ENCODE measurements at regions of chr7 and their contacts with region 1.

Region 1: DNA sequence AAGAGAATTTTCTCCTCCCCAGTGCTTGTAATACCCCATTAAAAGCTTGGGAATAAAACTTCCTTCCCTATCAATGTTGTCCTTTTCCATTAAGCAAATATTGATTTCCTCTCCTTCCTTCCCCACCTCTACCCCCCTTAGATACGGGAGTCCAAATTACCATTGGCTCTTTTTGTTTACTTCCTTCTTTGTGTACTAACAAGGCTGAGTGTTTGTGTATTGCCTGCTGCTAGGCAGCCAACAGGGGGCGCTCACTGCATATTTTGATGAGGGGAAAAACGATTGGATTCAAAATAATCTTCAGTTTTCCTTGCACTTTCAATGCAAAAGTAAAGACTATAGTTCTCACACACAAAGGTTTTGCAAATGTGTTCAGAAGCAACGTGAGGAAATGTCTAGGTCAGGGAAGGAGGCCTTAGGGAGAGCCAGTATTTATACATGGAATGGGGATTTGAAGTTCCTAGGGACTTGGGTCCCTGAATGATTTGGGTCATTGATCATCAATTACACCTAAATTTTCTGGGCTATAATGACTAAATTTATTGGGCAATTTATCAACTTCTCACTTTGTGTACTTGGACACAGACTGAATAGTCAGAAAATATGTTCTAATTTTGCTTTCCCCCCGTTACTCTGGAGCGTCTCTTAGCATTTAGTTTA is 23.6 kb upstream of the VPS41 start:
- DNase-seq: peak; percentile 46 to 73
- H3K4me3 ChIP-seq: no peak overlapping the region
- H3K4me3 Mint-ChIP-seq: no peak overlapping the region
- H3K27ac Mint-ChIP-seq: no peak overlapping the region
- H3K4me1 ChIP-seq: peaks cover 19% of the 10 kb centered on the region
- H3K4me1 Mint-ChIP-seq: peaks cover 7% of the 10 kb centered on the region
- H3K27me3 ChIP-seq: no peaks in the 10 kb centered on the region
- H3K27me3 Mint-ChIP-seq: no peaks in the 10 kb centered on the region
- CTCF ChIP-seq: peak; percentile 87 to 93

Region 2: DNA sequence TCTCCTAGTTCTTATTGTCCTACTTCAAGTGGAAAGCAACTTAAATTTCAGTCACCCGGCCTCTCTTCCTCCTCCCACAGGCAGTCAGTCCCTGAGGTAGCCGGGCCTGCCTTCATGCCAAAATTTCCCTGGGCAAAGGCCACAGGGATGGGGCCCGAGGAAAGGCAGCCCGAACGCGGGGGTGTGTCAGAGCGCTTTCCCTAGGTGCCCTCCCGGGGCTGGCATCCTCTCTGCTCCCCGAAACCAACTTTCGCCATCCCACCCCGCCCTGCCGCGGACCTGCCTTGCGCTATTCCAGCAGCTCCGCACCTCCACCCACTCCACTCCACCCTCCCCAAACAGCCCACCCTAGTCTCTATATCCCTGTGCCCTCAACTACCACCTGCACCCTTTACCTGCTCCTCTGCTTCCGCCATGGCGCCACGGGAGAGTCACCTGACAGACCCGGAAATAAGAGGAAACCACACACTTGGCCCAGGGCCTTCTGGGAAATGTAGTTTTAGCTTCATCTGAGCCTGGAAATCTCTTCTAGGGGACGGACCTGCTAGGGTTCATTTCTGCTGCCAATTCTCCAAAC is 23.8 kb before region 1 on chr7 and contains the start of gene VPS41:
- CTCF ChIA-PET with region 1: no interaction called
- POLR2A ChIA-PET with region 1: no interaction called
- intact Hi-C with region 1: loop called (anchors 1 kb)
- DNase-seq: peak; percentile 82 to 83
- H3K4me3 ChIP-seq: peak within 1 kb of the TSS; percentile 94
- H3K4me3 Mint-ChIP-seq: peak within 1 kb of the TSS; percentile 99
- H3K27ac Mint-ChIP-seq: peak within 1 kb of the TSS; percentile 87
- H3K4me1 ChIP-seq: peaks cover 19% of the 10 kb centered on the region; the same call in 1 of the 2 replicates
- H3K4me1 Mint-ChIP-seq: peaks cover 16% of the 10 kb centered on the region
- H3K27me3 ChIP-seq: no peaks in the 10 kb centered on the region
- H3K27me3 Mint-ChIP-seq: no peaks in the 10 kb centered on the region
- CTCF ChIP-seq: no peak
- total RNA-seq, gene VPS41: 73.9 and 86.9 TPM in 2 replicates

Region 3: GRCh38 chr7:39073432-39073831 is 140.8 kb after region 1 on chr7:
- CTCF ChIA-PET with region 1: no interaction called
- POLR2A ChIA-PET with region 1: no interaction called
- intact Hi-C with region 1: loop called (anchors 1 kb)
- DNase-seq: peak; percentile 51 to 55
- H3K4me3 ChIP-seq: no peak overlapping the region
- H3K4me3 Mint-ChIP-seq: peak overlapping the region; percentile 56
- H3K27ac Mint-ChIP-seq: peak overlapping the region; percentile 57
- H3K4me1 ChIP-seq: peaks cover 16% of the 10 kb centered on the region; the same call in 1 of the 2 replicates
- H3K4me1 Mint-ChIP-seq: peaks cover 15% of the 10 kb centered on the region
- H3K27me3 ChIP-seq: no peaks in the 10 kb centered on the region
- H3K27me3 Mint-ChIP-seq: no peaks in the 10 kb centered on the region
- CTCF ChIP-seq: no peak

Region 4: DNA sequence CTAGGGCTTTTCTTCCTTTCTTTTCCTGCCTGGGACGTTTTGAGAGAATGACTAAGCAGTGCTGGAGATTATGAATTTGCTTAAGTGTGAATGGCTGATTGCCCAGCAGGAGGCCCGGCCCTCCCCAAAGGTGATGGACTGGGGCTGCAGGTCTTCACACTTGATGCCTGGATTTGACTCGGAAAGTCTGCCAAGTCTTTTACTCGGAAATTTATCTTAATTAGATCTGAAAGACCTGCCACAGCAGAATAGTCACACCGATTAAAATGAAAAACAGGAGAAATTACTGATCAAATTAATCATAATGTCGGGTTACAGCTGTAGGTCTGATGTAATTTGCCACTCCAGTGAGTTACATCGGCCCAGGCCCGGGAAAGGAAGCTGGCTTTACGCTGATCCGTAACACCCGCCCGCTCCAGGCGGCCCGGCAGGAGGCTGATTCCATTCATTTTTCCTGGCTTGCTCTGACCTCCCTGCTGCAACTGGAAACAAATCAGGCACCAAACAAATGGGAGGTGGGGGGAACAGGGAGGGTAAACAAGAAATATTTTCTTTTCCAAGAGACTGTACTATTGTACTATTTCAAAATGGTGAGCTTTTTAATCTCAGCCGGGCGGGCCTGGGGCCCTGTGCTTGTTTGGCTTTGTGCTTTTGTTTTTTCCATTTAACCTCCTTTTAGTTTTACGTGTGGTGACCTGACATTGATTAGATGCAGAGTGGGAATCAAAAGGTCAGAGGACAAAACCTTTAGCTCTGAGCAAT is 421.2 kb after region 1 on chr7:
- CTCF ChIA-PET with region 1: no interaction called
- POLR2A ChIA-PET with region 1: no interaction called
- intact Hi-C with region 1: loop called (anchors 10 kb)
- DNase-seq: no peak
- H3K4me3 ChIP-seq: no peak overlapping the region
- H3K4me3 Mint-ChIP-seq: no peak overlapping the region
- H3K27ac Mint-ChIP-seq: no peak overlapping the region
- H3K4me1 ChIP-seq: no peaks in the 10 kb centered on the region
- H3K4me1 Mint-ChIP-seq: no peaks in the 10 kb centered on the region
- H3K27me3 ChIP-seq: no peaks in the 10 kb centered on the region
- H3K27me3 Mint-ChIP-seq: peaks cover 13% of the 10 kb centered on the region
- CTCF ChIP-seq: no peak

Region 5: DNA sequence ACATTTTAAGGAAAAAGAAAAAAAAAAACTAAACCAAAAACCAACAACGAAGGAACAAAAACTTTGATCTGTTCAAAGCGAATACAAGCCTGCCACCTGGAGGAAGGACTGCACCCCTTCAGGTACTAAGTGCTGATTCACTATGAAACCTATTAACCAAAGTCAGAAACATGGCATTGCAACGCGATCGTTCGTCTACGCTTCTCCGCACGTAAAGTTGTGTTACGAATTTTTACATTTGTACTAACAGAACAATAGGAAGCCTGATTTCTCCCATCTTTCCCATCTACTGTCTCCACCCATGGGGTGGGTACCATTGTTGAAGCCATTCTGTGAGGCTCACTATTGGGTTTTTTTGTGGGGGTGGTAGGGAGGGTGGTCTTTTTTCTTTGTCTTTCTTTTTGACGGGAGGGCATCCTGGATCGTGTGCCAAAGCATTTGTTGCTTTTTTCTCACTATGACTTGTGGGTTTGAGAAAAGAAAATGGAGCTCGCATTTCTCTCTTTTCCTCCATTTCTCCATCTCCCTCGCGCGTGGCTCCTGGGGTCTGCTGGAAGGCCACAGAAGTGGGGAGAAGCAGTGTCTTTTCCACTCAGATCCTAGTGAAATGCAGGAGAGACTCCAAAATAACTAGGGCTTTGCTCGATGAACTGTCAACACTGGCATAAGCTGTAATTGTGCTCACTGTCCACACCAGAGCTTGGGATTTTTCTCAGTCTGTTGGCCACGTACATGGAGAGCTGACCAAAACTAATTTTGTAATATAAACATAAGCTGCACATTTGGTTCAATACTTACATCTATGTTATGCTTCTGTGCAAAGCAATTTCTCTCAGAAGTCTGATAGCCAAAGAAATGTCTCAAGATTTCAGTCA is 532.7 kb after region 1 on chr7:
- CTCF ChIA-PET with region 1: no interaction called
- POLR2A ChIA-PET with region 1: no interaction called
- intact Hi-C with region 1: loop called (anchors 1 kb)
- DNase-seq: peak; percentile 53 to 64
- H3K4me3 ChIP-seq: no peak overlapping the region
- H3K4me3 Mint-ChIP-seq: peak overlapping the region; percentile 49
- H3K27ac Mint-ChIP-seq: peak overlapping the region; percentile 36
- H3K4me1 ChIP-seq: peaks cover 4% of the 10 kb centered on the region; the same call in 1 of the 2 replicates
- H3K4me1 Mint-ChIP-seq: peaks cover 9% of the 10 kb centered on the region
- H3K27me3 ChIP-seq: no peaks in the 10 kb centered on the region
- H3K27me3 Mint-ChIP-seq: peaks cover 7% of the 10 kb centered on the region
- CTCF ChIP-seq: peak; percentile 78 to 79